Activated CD8-positive, alpha-beta T cell treated with anti-CD3 and anti-CD28 coated beads for 36 hours (primary cell): ENCODE measurements at regions of chr4 and their contacts with region 1.

Region 1: DNA sequence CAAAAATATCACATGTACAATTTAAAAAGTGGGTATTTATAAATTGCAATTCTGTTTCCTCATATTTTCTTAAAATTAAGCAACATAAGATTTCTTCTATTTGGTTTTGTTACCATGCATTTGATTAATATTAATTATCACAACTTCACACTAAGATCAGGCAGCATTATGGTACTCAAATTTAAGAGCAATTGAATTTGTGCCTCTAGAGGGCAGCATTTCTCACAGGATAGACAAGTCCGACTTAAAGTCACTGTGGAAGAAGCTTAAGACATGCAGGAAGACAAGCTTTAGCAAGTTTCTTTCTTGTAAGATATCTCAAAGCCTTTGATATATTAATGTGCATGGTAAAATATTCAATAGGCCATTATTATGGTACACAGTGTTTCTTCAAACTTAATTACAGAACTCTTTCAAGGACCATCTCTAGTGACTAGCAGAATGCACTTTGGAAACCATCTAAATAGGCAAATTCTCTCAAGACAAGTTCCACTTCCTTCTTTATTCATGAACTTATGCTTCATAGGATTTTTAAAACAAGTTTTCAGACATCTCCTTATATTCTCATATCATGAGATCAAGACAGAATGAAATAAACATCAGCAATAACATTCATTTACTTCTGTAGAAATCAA is 35.0 kb downstream of the FBXW7 start:
- DNase-seq: peak; percentile 69
- ATAC-seq: peak; percentile 81
- H3K4me3 Mint-ChIP-seq: no peak overlapping the region
- H3K27ac Mint-ChIP-seq: no peak overlapping the region
- H3K4me1 Mint-ChIP-seq: peaks cover 34% of the 10 kb centered on the region
- H3K27me3 Mint-ChIP-seq: no peaks in the 10 kb centered on the region
- CTCF ChIP-seq: peak; percentile 92

Region 2: GRCh38 chr4:152408514-152409327 is 92.2 kb before region 1 on chr4:
- CTCF ChIA-PET with region 1: interaction called, 15 read pairs
- POLR2A ChIA-PET with region 1: no interaction called
- intact Hi-C with region 1: no loop called
- DNase-seq: peak; percentile 23
- ATAC-seq: peak; percentile 66
- H3K4me3 Mint-ChIP-seq: no peak overlapping the region
- H3K27ac Mint-ChIP-seq: no peak overlapping the region
- H3K4me1 Mint-ChIP-seq: peaks cover 21% of the 10 kb centered on the region
- H3K27me3 Mint-ChIP-seq: no peaks in the 10 kb centered on the region
- CTCF ChIP-seq: peak; percentile 73

Region 3: GRCh38 chr4:152485726-152486276 is 15.1 kb before region 1 on chr4:
- CTCF ChIA-PET with region 1: interaction called, 25 read pairs
- POLR2A ChIA-PET with region 1: no interaction called
- intact Hi-C with region 1: no loop called
- DNase-seq: peak; percentile 45
- ATAC-seq: peak; percentile 99
- H3K4me3 Mint-ChIP-seq: no peak overlapping the region
- H3K27ac Mint-ChIP-seq: peak overlapping the region; percentile 38
- H3K4me1 Mint-ChIP-seq: peaks cover 51% of the 10 kb centered on the region
- H3K27me3 Mint-ChIP-seq: no peaks in the 10 kb centered on the region
- CTCF ChIP-seq: no peak

Region 4: GRCh38 chr4:152535903-152536544 is 35.1 kb after region 1 on chr4 and contains the start of gene FBXW7:
- CTCF ChIA-PET with region 1: interaction called, 20 read pairs
- POLR2A ChIA-PET with region 1: interaction called, 6 read pairs
- intact Hi-C with region 1: no loop called
- DNase-seq: peak; percentile 99
- ATAC-seq: peak; percentile 88
- H3K4me3 Mint-ChIP-seq: peak within 1 kb of the TSS; percentile 90
- H3K27ac Mint-ChIP-seq: peak within 1 kb of the TSS; percentile 99
- H3K4me1 Mint-ChIP-seq: peaks cover 58% of the 10 kb centered on the region
- H3K27me3 Mint-ChIP-seq: no peaks in the 10 kb centered on the region
- CTCF ChIP-seq: no peak
- total RNA-seq, gene FBXW7: 32.6 to 35.1 TPM

Region 5: DNA sequence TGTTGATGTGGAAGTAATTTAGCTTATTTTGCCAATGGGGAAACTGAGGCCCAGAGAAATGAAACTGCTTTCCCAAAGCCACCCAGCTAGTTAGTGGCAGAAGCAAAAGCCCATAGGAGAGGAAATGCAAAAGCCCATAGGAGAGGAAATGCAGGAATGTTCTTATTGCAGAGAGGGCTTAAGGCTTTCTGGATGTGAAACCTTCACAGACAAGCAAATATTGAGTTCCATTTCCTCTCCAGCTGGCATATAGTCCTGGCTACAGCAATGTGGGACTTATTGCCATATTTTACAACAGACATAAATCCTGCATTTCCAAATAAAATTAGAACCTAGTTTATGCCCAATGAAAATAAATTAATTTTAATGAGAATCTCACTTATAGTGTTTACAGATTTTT is 109.2 kb after region 1 on chr4:
- CTCF ChIA-PET with region 1: interaction called, 16 read pairs
- POLR2A ChIA-PET with region 1: no interaction called
- intact Hi-C with region 1: no loop called
- DNase-seq: no peak
- ATAC-seq: no peak
- H3K4me3 Mint-ChIP-seq: no peak overlapping the region
- H3K27ac Mint-ChIP-seq: no peak overlapping the region
- H3K4me1 Mint-ChIP-seq: no peaks in the 10 kb centered on the region
- H3K27me3 Mint-ChIP-seq: peaks cover 10% of the 10 kb centered on the region
- CTCF ChIP-seq: no peak

Region 6: GRCh38 chr4:152679414-152680281 is 178.7 kb after region 1 on chr4 and contains the start of gene TMEM154:
- CTCF ChIA-PET with region 1: interaction called, 28 read pairs
- POLR2A ChIA-PET with region 1: no interaction called
- intact Hi-C with region 1: no loop called
- DNase-seq: peak; percentile 75
- ATAC-seq: peak; percentile 81
- H3K4me3 Mint-ChIP-seq: peak within 1 kb of the TSS; percentile 87
- H3K27ac Mint-ChIP-seq: peak within 1 kb of the TSS; percentile 87
- H3K4me1 Mint-ChIP-seq: peaks cover 56% of the 10 kb centered on the region
- H3K27me3 Mint-ChIP-seq: no peaks in the 10 kb centered on the region
- CTCF ChIP-seq: no peak
- total RNA-seq, gene TMEM154: 12.2 to 17.5 TPM